Activated CD4-positive, alpha-beta T cell treated with anti-CD3 and anti-CD28 coated beads, Interleukin-2, amount 10 ng/mL, durations not matched to agents 24 days and 14 days (primary cell): ENCODE measurements at regions of chr6 and their contacts with region 1.

Region 1: GRCh38 chr6:149082286-149082707 is 235.2 kb upstream of the TAB2 start:
- DNase-seq: peak; percentile 96
- H3K4me3 Mint-ChIP-seq: peak overlapping the region; percentile 69
- H3K27ac Mint-ChIP-seq: peak overlapping the region; percentile 92
- H3K4me1 Mint-ChIP-seq: peaks cover 76% of the 10 kb centered on the region
- H3K27me3 Mint-ChIP-seq: no peaks in the 10 kb centered on the region

Region 2: GRCh38 chr6:148934539-148934938 is 147.8 kb before region 1 on chr6:
- intact Hi-C with region 1: no loop called
- DNase-seq: no peak
- H3K4me3 Mint-ChIP-seq: no peak overlapping the region
- H3K27ac Mint-ChIP-seq: no peak overlapping the region
- H3K4me1 Mint-ChIP-seq: no peaks in the 10 kb centered on the region
- H3K27me3 Mint-ChIP-seq: peaks cover 29% of the 10 kb centered on the region

Region 3: DNA sequence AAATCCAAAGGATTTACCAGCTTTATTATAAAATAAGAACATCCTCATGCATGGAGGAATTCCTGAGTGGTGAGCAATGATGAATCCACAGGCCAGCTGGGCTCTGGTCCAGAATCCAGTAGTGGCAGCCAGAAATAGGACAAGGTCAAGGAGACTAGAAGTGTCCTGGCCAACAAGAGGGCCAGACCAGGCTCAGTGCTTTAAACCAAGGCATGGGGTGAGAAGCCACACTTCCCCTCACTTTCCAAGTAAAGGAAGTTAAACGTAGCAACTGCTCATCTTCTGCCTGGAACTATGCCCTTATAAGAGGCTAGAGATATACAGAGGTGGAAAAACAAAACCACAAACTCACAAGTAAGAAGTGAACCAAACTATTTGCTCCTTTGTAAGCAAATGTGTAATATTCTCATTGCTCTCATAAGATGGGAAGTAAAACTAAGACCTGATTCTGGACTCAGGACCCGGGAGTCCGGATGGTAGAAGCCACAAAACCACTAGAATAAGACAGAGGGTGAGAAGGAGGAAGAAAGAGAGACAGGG is 82.3 kb before region 1 on chr6:
- intact Hi-C with region 1: no loop called
- DNase-seq: peak; percentile 61
- H3K4me3 Mint-ChIP-seq: peak overlapping the region; percentile 11
- H3K27ac Mint-ChIP-seq: no peak overlapping the region
- H3K4me1 Mint-ChIP-seq: peaks cover 13% of the 10 kb centered on the region
- H3K27me3 Mint-ChIP-seq: peaks cover 10% of the 10 kb centered on the region

Region 4: DNA sequence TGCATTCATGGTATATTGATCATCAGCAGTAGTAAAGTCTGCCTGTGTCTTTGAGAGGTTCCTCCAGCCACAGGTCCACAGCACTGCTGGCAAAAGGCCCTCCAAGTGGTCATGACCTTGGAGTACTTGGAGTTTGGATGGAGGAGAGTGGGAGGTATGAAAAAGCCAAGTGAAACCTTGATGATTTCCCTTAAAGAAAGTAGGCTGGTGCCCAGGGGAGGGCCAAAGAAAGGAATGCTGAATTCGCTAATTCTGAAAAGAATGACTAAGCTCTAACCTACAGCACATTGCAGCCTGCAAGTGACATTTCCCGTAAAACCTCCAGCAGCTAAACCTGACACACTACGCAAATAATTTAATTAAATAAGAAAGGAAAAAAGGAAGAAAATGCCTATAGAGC is 11.9 kb after region 1 on chr6:
- intact Hi-C with region 1: loop called (anchors 1 kb)
- DNase-seq: peak; percentile 76
- H3K4me3 Mint-ChIP-seq: peak overlapping the region; percentile 71
- H3K27ac Mint-ChIP-seq: peak overlapping the region; percentile 95
- H3K4me1 Mint-ChIP-seq: peaks cover 74% of the 10 kb centered on the region
- H3K27me3 Mint-ChIP-seq: no peaks in the 10 kb centered on the region

Region 5: GRCh38 chr6:149147938-149148718 is 65.8 kb after region 1 on chr6:
- intact Hi-C with region 1: loop called (anchors 2 kb)
- DNase-seq: peak; percentile 85
- H3K4me3 Mint-ChIP-seq: peak overlapping the region; percentile 70
- H3K27ac Mint-ChIP-seq: peak overlapping the region; percentile 94
- H3K4me1 Mint-ChIP-seq: peaks cover 80% of the 10 kb centered on the region
- H3K27me3 Mint-ChIP-seq: no peaks in the 10 kb centered on the region

Region 6: DNA sequence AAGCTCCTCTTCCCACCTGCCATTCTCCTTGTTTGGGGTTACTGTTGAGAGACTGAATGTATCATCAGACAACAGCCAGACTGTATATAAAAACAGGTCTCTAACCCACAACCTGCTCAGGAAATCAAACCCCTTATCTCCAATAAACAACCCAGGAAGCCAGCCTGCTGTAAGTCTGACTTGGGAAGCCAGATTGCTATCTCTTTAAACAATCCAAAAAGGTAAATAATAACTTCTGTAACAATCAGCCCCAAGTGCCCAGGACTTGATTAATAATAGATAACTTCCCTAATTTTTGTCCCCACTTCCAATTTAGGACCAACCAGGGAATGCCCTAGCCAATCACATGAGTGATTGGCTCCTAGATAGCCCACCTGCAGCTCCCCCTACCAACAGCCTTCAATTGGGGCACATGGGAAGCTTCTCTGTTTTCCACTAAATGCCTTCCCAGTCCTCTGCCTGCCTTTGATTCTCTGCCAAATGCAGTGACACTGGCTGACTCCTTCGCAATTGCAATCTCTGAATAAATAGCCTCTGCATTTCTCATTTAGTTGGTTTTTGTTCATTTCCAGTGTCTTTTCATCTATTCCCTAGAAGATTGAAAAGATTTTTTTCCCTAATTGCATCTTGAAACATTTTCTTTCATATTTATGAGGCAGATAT is 118.1 kb after region 1 on chr6:
- intact Hi-C with region 1: no loop called
- DNase-seq: no peak
- H3K4me3 Mint-ChIP-seq: no peak overlapping the region
- H3K27ac Mint-ChIP-seq: no peak overlapping the region
- H3K4me1 Mint-ChIP-seq: peaks cover 21% of the 10 kb centered on the region
- H3K27me3 Mint-ChIP-seq: no peaks in the 10 kb centered on the region

Region 7: GRCh38 chr6:149431905-149432775 is 349.8 kb after region 1 on chr6:
- intact Hi-C with region 1: loop called (anchors 1 kb)
- DNase-seq: peak; percentile 97
- H3K4me3 Mint-ChIP-seq: peak overlapping the region; percentile 69
- H3K27ac Mint-ChIP-seq: peak overlapping the region; percentile 92
- H3K4me1 Mint-ChIP-seq: peaks cover 16% of the 10 kb centered on the region
- H3K27me3 Mint-ChIP-seq: no peaks in the 10 kb centered on the region

Region 8: DNA sequence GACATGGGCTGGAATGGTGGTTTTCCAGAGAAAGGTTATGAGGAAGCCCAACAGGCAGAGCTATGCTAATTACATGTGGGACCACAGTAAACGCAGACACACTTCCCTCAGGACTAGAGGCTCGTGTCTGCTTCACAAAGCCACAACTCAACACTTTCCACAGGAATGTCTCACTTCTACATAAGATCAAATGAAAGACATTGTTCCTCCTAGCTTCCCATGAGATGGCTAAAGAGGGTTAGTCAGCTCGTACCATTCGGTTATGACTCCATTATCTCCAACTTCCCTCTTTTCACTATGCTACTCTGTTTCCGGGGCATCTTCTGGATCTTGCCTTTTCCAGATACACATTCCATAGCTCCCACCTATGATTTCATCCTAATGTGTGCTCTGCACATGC is 431.6 kb after region 1 on chr6:
- intact Hi-C with region 1: loop called (anchors 2 kb)
- DNase-seq: peak; percentile 49
- H3K4me3 Mint-ChIP-seq: no peak overlapping the region
- H3K27ac Mint-ChIP-seq: peak overlapping the region; percentile 67
- H3K4me1 Mint-ChIP-seq: peaks cover 44% of the 10 kb centered on the region
- H3K27me3 Mint-ChIP-seq: no peaks in the 10 kb centered on the region